ENCODE measurements at regions of chr3 and their contacts with region 1.

Region 1: DNA sequence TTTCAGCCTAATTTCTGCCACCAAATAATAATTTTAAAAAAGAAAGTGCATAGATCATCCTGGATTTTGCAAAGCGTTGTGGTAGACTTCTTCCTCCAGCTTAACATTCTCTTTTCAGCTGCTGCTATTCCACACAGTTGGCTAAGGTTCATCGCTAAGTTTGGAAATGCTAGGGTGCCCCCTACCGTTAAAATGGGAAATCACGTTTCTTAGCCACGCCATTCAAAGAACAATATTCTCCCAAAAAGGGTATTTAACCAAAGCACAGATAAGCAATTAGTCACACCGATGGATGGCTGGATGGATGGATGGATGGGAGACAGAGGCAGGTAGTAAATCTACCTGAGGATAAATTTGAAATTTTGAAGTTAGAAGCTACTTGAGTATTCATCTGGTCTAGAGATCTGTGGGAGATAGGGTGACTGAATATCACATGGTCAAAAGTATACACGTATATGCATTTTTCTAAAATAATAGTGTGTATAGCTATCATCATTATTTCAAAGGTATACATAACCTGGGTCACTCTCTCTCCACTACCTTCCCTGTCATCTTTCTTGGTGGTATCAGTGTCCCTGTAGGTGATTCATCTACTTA is 67.2 kb downstream of the EFHB start:
- DNase-seq: peak in 1 of 2 donors; percentile 36
- ATAC-seq: peak; percentile 80

Region 2: GRCh38 chr3:19046440-19046839 is 820.4 kb before region 1 on chr3:
- intact Hi-C with region 1: loop called in 1 of 2 experiments (anchors 5 kb)
- DNase-seq: no peak
- ATAC-seq: no peak

Region 3: GRCh38 chr3:19348929-19349564 is 517.8 kb before region 1 on chr3:
- intact Hi-C with region 1: loop called in 1 of 2 experiments (anchors 10 kb)
- DNase-seq: no peak
- ATAC-seq: peak; percentile 86

Measured in left colon (tissue), 2 donors.